ENCODE measurements at regions of chr13 and their contacts with region 1.

Region 1: GRCh38 chr13:73984949-73985691 is 149.1 kb downstream of the KLF12 start:
- DNase-seq: peak; percentile 48 to 95 (median 91)
- ATAC-seq: peak; percentile 94
- H3K4me3 ChIP-seq: peak overlapping the region; percentile 14
- H3K4me3 Mint-ChIP-seq: peak overlapping the region in 9 of 10 donors; percentile 67 to 89 (median 78)
- H3K27ac ChIP-seq: peak overlapping the region; percentile 82
- H3K27ac Mint-ChIP-seq: peak overlapping the region in 1 of 9 donors; percentile 80
- H3K4me1 ChIP-seq: peaks cover 28 to 52% of the 10 kb centered on the region in 2 donors
- H3K4me1 Mint-ChIP-seq: peaks cover 28 to 54% (median 44%) of the 10 kb centered on the region in 7 donors
- H3K27me3 ChIP-seq: no peaks in the 10 kb centered on the region
- H3K27me3 Mint-ChIP-seq: no peaks in the 10 kb centered on the region

Region 2: GRCh38 chr13:73058736-73059459 is 926.2 kb before region 1 on chr13 and contains the start of gene KLF5:
- CTCF ChIA-PET with region 1: no interaction called
- POLR2A ChIA-PET with region 1: no interaction called
- intact Hi-C with region 1: loop called in 1 of 2 experiments (anchors 5 kb)
- DNase-seq: peak; percentile 93 to 98 (median 94)
- ATAC-seq: peak; percentile 98
- H3K4me3 ChIP-seq: peak within 1 kb of the TSS; percentile 58
- H3K4me3 Mint-ChIP-seq: peak within 1 kb of the TSS; percentile 82 to 94 (median 90)
- H3K27ac ChIP-seq: peak within 1 kb of the TSS; percentile 42
- H3K27ac Mint-ChIP-seq: peak within 1 kb of the TSS; percentile 38 to 92 (median 79)
- H3K4me1 ChIP-seq: peaks cover 4 to 10% of the 10 kb centered on the region in 2 donors
- H3K4me1 Mint-ChIP-seq: peaks cover 6 to 32% (median 23%) of the 10 kb centered on the region in 7 donors
- H3K27me3 ChIP-seq: peaks cover 5 to 10% of the 10 kb centered on the region in 2 donors
- H3K27me3 Mint-ChIP-seq: peaks cover 19 to 58% (median 40%) of the 10 kb centered on the region in 5 donors
- total RNA-seq, gene KLF5: 3.6 to 13.3 (median 5.7) TPM

Region 3: DNA sequence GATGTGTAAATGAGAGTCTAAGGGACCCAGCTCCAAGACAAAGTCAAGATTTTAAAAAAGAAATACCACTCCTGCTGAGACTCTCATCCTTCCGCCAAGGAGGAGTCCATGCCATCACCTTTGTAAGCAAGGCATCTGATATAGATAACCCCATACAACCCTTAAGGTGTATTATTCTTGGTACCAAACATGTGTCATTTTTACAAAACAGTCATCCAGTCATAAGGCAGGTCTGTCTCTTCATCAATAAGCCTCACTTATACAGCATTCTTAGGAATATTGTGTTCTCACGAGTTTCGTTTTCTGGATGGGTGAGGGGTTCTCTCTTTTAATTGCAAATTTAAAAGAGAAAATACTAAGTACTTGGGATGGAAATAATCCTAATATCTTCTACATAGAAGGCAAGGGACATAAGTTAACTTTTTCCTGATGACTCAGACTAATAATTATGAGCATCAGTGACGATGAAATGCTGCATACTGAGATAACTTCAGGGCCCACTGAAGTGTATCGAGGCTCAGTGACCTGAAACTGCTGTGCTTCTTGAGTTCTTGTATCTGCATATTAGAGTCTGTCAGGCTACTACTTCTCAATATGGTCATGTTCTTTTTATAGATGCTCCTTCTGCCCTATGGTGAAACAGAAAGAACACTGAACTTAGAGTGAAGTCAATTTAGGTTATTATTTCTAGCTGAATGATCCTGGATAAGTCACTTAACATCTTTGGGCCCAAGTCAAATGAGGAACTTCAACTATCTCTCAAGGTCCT is 17.5 kb before region 1 on chr13:
- CTCF ChIA-PET with region 1: interaction called, 4 read pairs
- POLR2A ChIA-PET with region 1: interaction called, 4 read pairs
- intact Hi-C with region 1: loop called in 1 of 2 experiments (anchors 2 kb)
- DNase-seq: no peak
- ATAC-seq: peak; percentile 51
- H3K4me3 ChIP-seq: no peak overlapping the region
- H3K4me3 Mint-ChIP-seq: no peak overlapping the region
- H3K27ac ChIP-seq: no peak overlapping the region
- H3K27ac Mint-ChIP-seq: peak overlapping the region in 5 of 9 donors; percentile 3 to 61 (median 17)
- H3K4me1 ChIP-seq: peaks cover 4 to 9% of the 10 kb centered on the region in 2 donors
- H3K4me1 Mint-ChIP-seq: peaks cover 15 to 83% (median 78%) of the 10 kb centered on the region in 7 donors
- H3K27me3 ChIP-seq: no peaks in the 10 kb centered on the region
- H3K27me3 Mint-ChIP-seq: no peaks in the 10 kb centered on the region

Region 4: GRCh38 chr13:74026753-74027152 is 41.6 kb after region 1 on chr13:
- CTCF ChIA-PET with region 1: interaction called, 3 read pairs
- POLR2A ChIA-PET with region 1: interaction called, 5 read pairs
- intact Hi-C with region 1: loop called (anchors 1 to 2 kb)
- DNase-seq: peak; percentile 22 to 77 (median 68)
- ATAC-seq: peak; percentile 94
- H3K4me3 ChIP-seq: peak overlapping the region; percentile 21
- H3K4me3 Mint-ChIP-seq: peak overlapping the region; percentile 77 to 92 (median 84)
- H3K27ac ChIP-seq: peak overlapping the region; percentile 77
- H3K27ac Mint-ChIP-seq: peak overlapping the region; percentile 80 to 97 (median 94)
- H3K4me1 ChIP-seq: peaks cover 51 to 59% of the 10 kb centered on the region in 2 donors
- H3K4me1 Mint-ChIP-seq: peaks cover 36 to 97% (median 94%) of the 10 kb centered on the region in 7 donors
- H3K27me3 ChIP-seq: no peaks in the 10 kb centered on the region
- H3K27me3 Mint-ChIP-seq: no peaks in the 10 kb centered on the region

Region 5: DNA sequence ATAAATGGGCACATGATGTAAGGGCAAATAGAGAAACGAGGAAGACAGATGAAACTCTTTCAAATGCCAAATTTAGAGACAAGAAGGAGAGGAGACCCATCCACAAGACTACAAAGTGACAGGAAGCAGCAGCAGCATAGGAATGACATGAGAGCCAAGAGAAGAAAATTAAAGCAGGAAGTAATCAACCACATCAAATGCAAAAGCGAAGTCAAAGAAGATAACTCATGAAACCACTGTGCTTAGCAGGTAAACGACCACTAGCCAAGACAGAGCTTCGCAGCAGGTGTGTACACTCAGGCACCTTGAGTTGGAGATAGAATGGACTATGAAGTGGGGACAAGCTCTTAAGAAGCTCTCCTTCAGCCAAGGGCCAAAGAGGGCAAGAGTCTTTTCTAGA is 84.9 kb after region 1 on chr13:
- CTCF ChIA-PET with region 1: no interaction called
- POLR2A ChIA-PET with region 1: no interaction called
- intact Hi-C with region 1: no loop called
- DNase-seq: peak in 7 of 9 donors; percentile 59 to 82 (median 79)
- ATAC-seq: peak; percentile 85
- H3K4me3 ChIP-seq: peak overlapping the region; percentile 32
- H3K4me3 Mint-ChIP-seq: peak overlapping the region; percentile 58 to 88 (median 74)
- H3K27ac ChIP-seq: no peak overlapping the region
- H3K27ac Mint-ChIP-seq: peak overlapping the region; percentile 56 to 93 (median 83)
- H3K4me1 ChIP-seq: peaks cover 46 to 51% of the 10 kb centered on the region in 2 donors
- H3K4me1 Mint-ChIP-seq: peaks cover 49 to 90% (median 83%) of the 10 kb centered on the region in 7 donors
- H3K27me3 ChIP-seq: no peaks in the 10 kb centered on the region
- H3K27me3 Mint-ChIP-seq: no peaks in the 10 kb centered on the region

Region 6: GRCh38 chr13:74206061-74206561 is 221.0 kb after region 1 on chr13:
- CTCF ChIA-PET with region 1: no interaction called
- POLR2A ChIA-PET with region 1: no interaction called
- intact Hi-C with region 1: no loop called
- DNase-seq: no peak
- ATAC-seq: no peak
- H3K4me3 ChIP-seq: no peak overlapping the region
- H3K4me3 Mint-ChIP-seq: no peak overlapping the region
- H3K27ac ChIP-seq: no peak overlapping the region
- H3K27ac Mint-ChIP-seq: no peak overlapping the region
- H3K4me1 ChIP-seq: no peaks in the 10 kb centered on the region
- H3K4me1 Mint-ChIP-seq: peaks cover 0 to 8% (median 0%) of the 10 kb centered on the region in 7 donors
- H3K27me3 ChIP-seq: no peaks in the 10 kb centered on the region
- H3K27me3 Mint-ChIP-seq: peaks cover 0 to 28% (median 0%) of the 10 kb centered on the region in 5 donors

Region 7: GRCh38 chr13:74230984-74231501 is 245.9 kb after region 1 on chr13:
- CTCF ChIA-PET with region 1: no interaction called
- POLR2A ChIA-PET with region 1: no interaction called
- intact Hi-C with region 1: loop called in 1 of 2 experiments (anchors 2 kb)
- DNase-seq: peak in 7 of 9 donors; percentile 37 to 78 (median 69)
- ATAC-seq: peak; percentile 85
- H3K4me3 ChIP-seq: peak overlapping the region; percentile 61
- H3K4me3 Mint-ChIP-seq: peak overlapping the region; percentile 72 to 87 (median 84)
- H3K27ac ChIP-seq: peak overlapping the region; percentile 70
- H3K27ac Mint-ChIP-seq: peak overlapping the region; percentile 86 to 97 (median 90)
- H3K4me1 ChIP-seq: peaks cover 0 to 29% of the 10 kb centered on the region in 2 donors
- H3K4me1 Mint-ChIP-seq: peaks cover 8 to 62% (median 52%) of the 10 kb centered on the region in 7 donors
- H3K27me3 ChIP-seq: no peaks in the 10 kb centered on the region
- H3K27me3 Mint-ChIP-seq: no peaks in the 10 kb centered on the region

Measured in naive thymus-derived CD4-positive, alpha-beta T cell (primary cell).